ENCODE measurements at regions of chr22 and their contacts with region 1.

Region 1: DNA sequence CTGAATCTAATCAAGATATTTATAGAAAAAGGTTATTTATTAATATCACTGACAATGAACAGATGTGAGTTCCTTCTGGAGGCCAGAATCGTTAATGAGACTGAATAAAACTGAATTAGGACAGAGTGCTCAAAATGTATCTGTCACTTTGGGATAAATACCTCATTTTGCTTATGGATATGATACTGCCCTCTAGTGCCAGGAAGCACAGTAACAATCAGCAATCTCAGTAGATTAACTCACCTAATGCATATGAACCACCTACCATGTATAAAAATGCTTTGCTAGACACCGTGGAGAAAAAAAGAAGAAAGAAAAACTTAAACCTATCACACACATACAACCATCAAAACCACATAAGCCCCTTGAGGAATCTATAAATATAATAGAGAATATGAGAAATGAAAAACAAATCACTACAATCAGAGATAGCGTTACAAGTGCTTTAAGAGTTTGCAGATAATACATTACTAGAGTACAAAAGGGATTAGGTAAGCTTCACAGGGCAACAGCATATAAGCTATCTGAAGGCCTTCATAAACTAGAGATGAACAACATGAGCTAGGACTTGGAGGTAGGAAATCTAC is 117.4 kb downstream of the SGSM3 start:
- DNase-seq: no peak
- ATAC-seq: no peak
- H3K4me3 Mint-ChIP-seq: no peak overlapping the region
- H3K27ac Mint-ChIP-seq: peak overlapping the region; percentile 5
- H3K4me1 Mint-ChIP-seq: peaks cover 35% of the 10 kb centered on the region
- H3K27me3 Mint-ChIP-seq: no peaks in the 10 kb centered on the region
- CTCF ChIP-seq: peak; percentile 53

Region 2: GRCh38 chr22:40289991-40290459 is 197.7 kb before region 1 on chr22:
- CTCF ChIA-PET with region 1: no interaction called
- POLR2A ChIA-PET with region 1: no interaction called
- intact Hi-C with region 1: no loop called
- DNase-seq: no peak
- ATAC-seq: peak; percentile 83
- H3K4me3 Mint-ChIP-seq: no peak overlapping the region
- H3K27ac Mint-ChIP-seq: peak overlapping the region; percentile 9
- H3K4me1 Mint-ChIP-seq: peaks cover 12% of the 10 kb centered on the region
- H3K27me3 Mint-ChIP-seq: no peaks in the 10 kb centered on the region
- CTCF ChIP-seq: no peak

Region 3: DNA sequence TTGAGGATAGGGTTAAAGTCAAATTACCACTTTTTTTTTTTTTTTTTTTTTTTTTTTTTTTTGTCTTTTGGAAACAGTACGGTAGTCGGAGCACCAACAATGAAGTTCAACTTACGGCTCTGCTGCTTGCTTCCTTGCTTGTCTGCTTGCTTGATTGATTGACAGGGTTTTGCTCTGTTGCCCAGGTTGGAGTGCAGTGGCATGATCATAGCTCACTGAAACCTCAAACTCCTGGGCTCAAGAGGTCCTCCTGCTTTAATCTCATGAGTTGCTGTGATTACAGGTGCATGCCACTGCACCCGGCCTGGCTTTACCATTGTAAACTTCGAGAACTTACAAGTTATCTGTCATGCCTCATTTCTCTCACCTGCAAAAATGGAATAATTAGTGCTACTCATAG is 111.6 kb before region 1 on chr22:
- CTCF ChIA-PET with region 1: interaction called, 5 read pairs
- POLR2A ChIA-PET with region 1: interaction called, 5 read pairs
- intact Hi-C with region 1: loop called (anchors 5 kb)
- DNase-seq: no peak
- ATAC-seq: peak; percentile 75
- H3K4me3 Mint-ChIP-seq: peak overlapping the region; percentile 57
- H3K27ac Mint-ChIP-seq: peak overlapping the region; percentile 75
- H3K4me1 Mint-ChIP-seq: peaks cover 71% of the 10 kb centered on the region
- H3K27me3 Mint-ChIP-seq: no peaks in the 10 kb centered on the region
- CTCF ChIP-seq: no peak

Region 4: GRCh38 chr22:40463017-40463631 is 24.6 kb before region 1 on chr22:
- CTCF ChIA-PET with region 1: interaction called, 3 read pairs
- POLR2A ChIA-PET with region 1: interaction called, 3 read pairs
- intact Hi-C with region 1: loop called (anchors 1 kb)
- DNase-seq: peak; percentile 24
- ATAC-seq: peak; percentile 89
- H3K4me3 Mint-ChIP-seq: peak overlapping the region; percentile 99
- H3K27ac Mint-ChIP-seq: peak overlapping the region; percentile 98
- H3K4me1 Mint-ChIP-seq: peaks cover 63% of the 10 kb centered on the region
- H3K27me3 Mint-ChIP-seq: no peaks in the 10 kb centered on the region
- CTCF ChIP-seq: no peak

Region 5: GRCh38 chr22:40592352-40593113 is 104.8 kb after region 1 on chr22:
- CTCF ChIA-PET with region 1: no interaction called
- POLR2A ChIA-PET with region 1: no interaction called
- intact Hi-C with region 1: loop called (anchors 1 kb)
- DNase-seq: peak; percentile 21
- ATAC-seq: peak; percentile 75
- H3K4me3 Mint-ChIP-seq: peak overlapping the region; percentile 76
- H3K27ac Mint-ChIP-seq: peak overlapping the region; percentile 96
- H3K4me1 Mint-ChIP-seq: peaks cover 65% of the 10 kb centered on the region
- H3K27me3 Mint-ChIP-seq: no peaks in the 10 kb centered on the region
- CTCF ChIP-seq: no peak

Region 6: GRCh38 chr22:40645579-40646197 is 157.9 kb after region 1 on chr22:
- CTCF ChIA-PET with region 1: interaction called, 8 read pairs
- POLR2A ChIA-PET with region 1: no interaction called
- intact Hi-C with region 1: loop called (anchors 1 kb)
- DNase-seq: no peak
- ATAC-seq: no peak
- H3K4me3 Mint-ChIP-seq: no peak overlapping the region
- H3K27ac Mint-ChIP-seq: no peak overlapping the region
- H3K4me1 Mint-ChIP-seq: peaks cover 14% of the 10 kb centered on the region
- H3K27me3 Mint-ChIP-seq: no peaks in the 10 kb centered on the region
- CTCF ChIP-seq: no peak

Measured in activated B cell treated with CpG ODN at 0.5 μM for 24 hours (primary cell).